ENCODE measurements at regions of chr10 and their contacts with region 1.

Region 1: GRCh38 chr10:122435212-122435827 is 19.1 kb upstream of the ARMS2 start:
- DNase-seq: peak in 1 of 3 donors; percentile 18
- ATAC-seq: peak; percentile 44
- H3K4me3 ChIP-seq: no peak overlapping the region
- H3K4me1 ChIP-seq: no peaks in the 10 kb centered on the region
- CTCF ChIP-seq: peak; percentile 14

Region 2: GRCh38 chr10:122232769-122233168 is 202.6 kb before region 1 on chr10:
- intact Hi-C with region 1: no loop called
- DNase-seq: no peak
- ATAC-seq: no peak
- H3K4me3 ChIP-seq: no peak overlapping the region
- H3K4me1 ChIP-seq: no peaks in the 10 kb centered on the region
- CTCF ChIP-seq: no peak

Region 3: DNA sequence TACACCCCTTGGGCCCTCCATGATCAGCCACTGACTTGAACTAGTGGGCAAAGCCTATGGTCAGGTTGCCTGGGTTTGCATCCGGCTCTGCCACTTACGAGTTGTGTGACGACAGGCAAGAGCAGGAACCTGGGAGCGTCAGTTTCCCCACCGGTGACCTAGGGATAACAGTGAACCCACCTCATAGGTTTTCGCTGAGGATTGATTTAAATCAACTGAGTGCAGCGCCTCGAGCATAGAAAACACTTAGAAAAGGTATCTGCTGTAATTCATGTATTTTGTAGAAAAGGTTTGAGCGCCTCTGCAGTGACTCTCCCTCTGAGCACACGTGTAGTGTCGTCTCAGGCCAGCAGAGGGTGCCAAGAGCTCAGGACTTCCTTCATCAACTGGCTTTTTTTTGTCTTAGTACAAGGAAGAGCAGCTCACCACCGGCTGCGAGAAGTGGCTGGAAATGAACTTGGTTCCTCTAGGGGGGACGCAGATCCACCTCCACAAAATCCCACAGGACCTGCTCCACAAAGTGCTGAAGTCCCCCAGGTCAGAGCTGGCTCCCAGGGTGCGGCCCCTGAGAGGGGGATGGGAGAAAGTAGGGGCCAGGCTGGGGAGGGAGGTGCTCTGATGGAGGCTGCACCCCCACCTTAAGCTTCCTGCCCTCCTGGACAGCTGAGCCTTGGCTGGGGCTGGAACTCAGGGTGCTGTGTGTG is 136.6 kb before region 1 on chr10:
- intact Hi-C with region 1: loop called (anchors 1 to 5 kb)
- DNase-seq: peak in 2 of 3 donors; percentile 81 to 84
- ATAC-seq: peak; percentile 96
- H3K4me3 ChIP-seq: no peak overlapping the region
- H3K4me1 ChIP-seq: peaks cover 6% of the 10 kb centered on the region
- CTCF ChIP-seq: peak; percentile 85

Region 4: GRCh38 chr10:122740649-122741048 is 305.3 kb after region 1 on chr10:
- intact Hi-C with region 1: no loop called
- DNase-seq: no peak
- ATAC-seq: no peak
- H3K4me3 ChIP-seq: no peak overlapping the region
- H3K4me1 ChIP-seq: no peaks in the 10 kb centered on the region
- CTCF ChIP-seq: no peak